ENCODE measurements at regions of chr9 and their contacts with region 1.

Region 1: DNA sequence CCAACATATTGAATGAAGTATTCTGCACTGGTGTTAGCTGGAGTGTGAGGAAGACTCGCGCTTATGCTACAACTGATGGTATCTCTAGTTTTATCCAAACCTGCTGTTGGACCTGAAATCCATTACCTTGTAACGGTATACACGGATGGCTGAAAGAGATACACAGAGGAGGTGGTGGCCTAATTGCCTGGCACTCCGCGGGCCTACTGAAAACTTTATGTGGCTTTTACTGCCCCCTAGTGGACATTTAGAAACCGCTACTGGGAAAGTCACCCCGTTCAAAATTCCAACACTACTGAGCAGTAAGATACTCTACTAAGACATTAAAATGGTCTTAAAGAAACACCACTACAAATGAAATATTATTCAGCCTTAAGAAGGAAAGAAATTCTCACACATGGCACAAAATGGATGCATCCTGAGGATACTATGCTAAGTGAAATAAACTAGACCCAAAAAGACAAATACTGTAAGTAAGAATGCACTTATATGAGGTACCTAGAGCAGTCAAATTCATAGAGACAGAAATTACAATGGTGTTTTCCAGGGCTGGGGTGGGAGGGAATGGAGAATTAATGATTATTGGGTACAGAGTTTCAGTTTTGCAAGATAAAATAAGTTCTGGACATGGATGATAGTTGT is 100.4 kb downstream of the TTLL11 start:
- DNase-seq: peak; percentile 32
- H3K4me3 Mint-ChIP-seq: no peak overlapping the region
- H3K27ac Mint-ChIP-seq: no peak overlapping the region
- H3K4me1 Mint-ChIP-seq: no peaks in the 10 kb centered on the region
- H3K27me3 Mint-ChIP-seq: peaks cover 2% of the 10 kb centered on the region

Region 2: GRCh38 chr9:121545875-121546423 is 446.7 kb before region 1 on chr9:
- intact Hi-C with region 1: loop called (anchors 1 kb)
- DNase-seq: peak; percentile 46
- H3K4me3 Mint-ChIP-seq: no peak overlapping the region
- H3K27ac Mint-ChIP-seq: no peak overlapping the region
- H3K4me1 Mint-ChIP-seq: no peaks in the 10 kb centered on the region
- H3K27me3 Mint-ChIP-seq: peaks cover 1% of the 10 kb centered on the region

Region 3: DNA sequence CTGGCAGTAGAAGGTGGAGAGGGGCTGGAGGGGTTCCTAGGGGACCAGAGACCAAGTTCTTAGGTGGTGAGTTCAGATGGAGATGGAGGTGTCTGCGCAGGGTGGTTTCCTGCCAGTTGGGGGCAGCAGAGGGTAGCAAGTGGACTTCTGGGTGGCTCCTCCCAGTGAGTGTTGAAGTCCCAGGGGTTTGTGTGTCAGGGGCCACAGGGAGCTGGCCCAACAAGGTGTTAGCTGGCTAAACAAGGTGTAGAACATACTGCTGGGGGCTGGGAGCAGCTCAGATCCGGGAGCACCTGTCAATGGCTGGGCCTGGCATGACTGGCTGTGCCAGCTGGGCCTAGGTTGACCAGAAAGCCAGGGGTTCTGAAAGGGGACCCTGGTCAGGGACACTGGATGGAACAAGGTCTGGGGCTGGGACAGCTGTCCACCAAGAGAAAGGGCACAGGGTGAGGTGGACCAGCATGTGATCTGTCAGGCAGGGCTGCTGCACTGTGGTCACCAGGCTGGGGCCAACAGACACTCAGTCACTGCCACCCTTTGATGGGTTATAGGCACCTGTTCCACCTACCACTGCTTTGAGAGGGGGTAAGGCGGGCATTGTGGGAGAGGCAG is 305.7 kb before region 1 on chr9:
- intact Hi-C with region 1: loop called (anchors 1 kb)
- DNase-seq: peak; percentile 53
- H3K4me3 Mint-ChIP-seq: no peak overlapping the region
- H3K27ac Mint-ChIP-seq: no peak overlapping the region
- H3K4me1 Mint-ChIP-seq: no peaks in the 10 kb centered on the region
- H3K27me3 Mint-ChIP-seq: peaks cover 10% of the 10 kb centered on the region

Region 4: GRCh38 chr9:121744002-121744686 is 248.5 kb before region 1 on chr9:
- intact Hi-C with region 1: loop called (anchors 1 kb)
- DNase-seq: peak; percentile 45
- H3K4me3 Mint-ChIP-seq: no peak overlapping the region
- H3K27ac Mint-ChIP-seq: no peak overlapping the region
- H3K4me1 Mint-ChIP-seq: peaks cover 13% of the 10 kb centered on the region
- H3K27me3 Mint-ChIP-seq: peaks cover 6% of the 10 kb centered on the region

Region 5: DNA sequence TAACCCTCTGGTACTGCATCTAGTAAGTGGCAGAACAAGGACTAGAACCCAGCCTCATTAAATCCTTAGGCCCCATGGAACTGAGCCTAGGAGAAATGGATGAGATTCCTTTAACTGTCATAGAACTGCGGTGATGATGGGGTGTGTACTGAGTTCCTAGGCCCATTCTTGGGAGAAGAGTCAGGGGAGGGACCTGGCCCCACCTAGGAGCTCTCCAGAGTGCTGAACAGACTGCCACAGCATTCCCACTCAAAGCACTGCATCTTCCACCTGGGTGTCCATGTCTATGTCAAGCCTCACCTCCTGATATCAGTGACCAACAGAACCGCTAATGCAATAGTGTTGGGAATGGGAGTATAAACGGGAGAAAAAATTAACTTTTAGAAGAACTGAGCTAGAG is 63.8 kb after region 1 on chr9:
- intact Hi-C with region 1: no loop called
- DNase-seq: no peak
- H3K4me3 Mint-ChIP-seq: no peak overlapping the region
- H3K27ac Mint-ChIP-seq: no peak overlapping the region
- H3K4me1 Mint-ChIP-seq: peaks cover 4% of the 10 kb centered on the region
- H3K27me3 Mint-ChIP-seq: peaks cover 5% of the 10 kb centered on the region